MCF 10A (cell line): ENCODE measurements at regions of chr14 and their contacts with region 1.

Region 1: DNA sequence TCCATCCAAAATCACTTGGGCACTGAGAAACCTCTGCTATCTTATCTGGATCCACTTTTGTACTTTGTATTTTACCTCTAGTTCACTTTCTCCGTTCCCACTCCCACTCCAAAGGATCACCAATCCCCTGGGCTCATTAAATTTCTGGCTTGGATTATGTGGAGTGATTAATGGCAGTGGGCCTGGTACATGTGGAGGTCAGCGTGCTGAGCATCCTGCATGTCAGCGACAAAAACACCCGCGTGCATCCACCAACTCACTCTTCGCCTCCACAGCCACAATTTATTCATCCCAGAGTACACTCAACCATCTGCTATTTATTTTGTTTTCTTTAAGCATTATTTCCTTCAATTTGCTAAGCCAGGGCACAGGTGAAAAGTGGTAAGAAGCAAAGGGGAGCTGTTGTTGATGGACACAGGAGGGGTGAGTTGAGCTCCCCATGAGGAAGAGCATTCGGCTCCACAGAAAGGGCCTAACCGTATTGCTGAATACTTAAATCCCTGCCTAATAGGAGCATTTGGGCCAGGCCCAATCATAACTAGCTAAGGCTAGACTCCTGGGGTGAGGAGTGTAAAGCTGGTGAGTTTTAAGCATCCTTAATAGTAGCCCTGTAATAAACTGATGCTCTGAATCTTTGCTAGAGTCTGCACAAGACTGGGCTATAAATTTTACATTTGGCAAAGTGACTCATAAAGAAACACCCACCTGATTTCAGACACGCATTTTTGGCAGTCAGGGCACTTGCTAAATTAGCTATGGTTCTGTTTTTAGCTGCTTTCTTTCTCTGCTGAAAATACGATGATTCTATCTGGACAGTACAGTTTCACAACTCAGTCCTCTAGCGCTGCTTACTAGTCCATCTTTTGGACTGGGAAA is 137.8 kb downstream of the SLC25A21 start:
- DNase-seq: peak; percentile 72
- H3K4me3 Mint-ChIP-seq: no peak overlapping the region
- H3K27ac Mint-ChIP-seq: peak overlapping the region; percentile 85
- H3K4me1 Mint-ChIP-seq: peaks cover 20% of the 10 kb centered on the region
- H3K27me3 Mint-ChIP-seq: no peaks in the 10 kb centered on the region
- CTCF ChIP-seq: no peak

Region 2: GRCh38 chr14:36845356-36846012 is 189.2 kb before region 1 on chr14:
- CTCF ChIA-PET with region 1: no interaction called
- POLR2A ChIA-PET with region 1: no interaction called
- intact Hi-C with region 1: no loop called
- DNase-seq: no peak
- H3K4me3 Mint-ChIP-seq: no peak overlapping the region
- H3K27ac Mint-ChIP-seq: no peak overlapping the region
- H3K4me1 Mint-ChIP-seq: no peaks in the 10 kb centered on the region
- H3K27me3 Mint-ChIP-seq: no peaks in the 10 kb centered on the region
- CTCF ChIP-seq: no peak

Region 3: GRCh38 chr14:37048666-37049071 is 14.0 kb after region 1 on chr14:
- CTCF ChIA-PET with region 1: no interaction called
- POLR2A ChIA-PET with region 1: interaction called, 13 read pairs
- intact Hi-C with region 1: no loop called
- DNase-seq: peak; percentile 62
- H3K4me3 Mint-ChIP-seq: peak overlapping the region; percentile 12
- H3K27ac Mint-ChIP-seq: peak overlapping the region; percentile 54
- H3K4me1 Mint-ChIP-seq: peaks cover 35% of the 10 kb centered on the region
- H3K27me3 Mint-ChIP-seq: no peaks in the 10 kb centered on the region
- CTCF ChIP-seq: no peak